HepG2 (cell line): ENCODE measurements at regions of chr14 and their contacts with region 1.

Region 1: GRCh38 chr14:28751467-28752058 is 15.0 kb upstream of the FOXG1 start:
- DNase-seq: peak; percentile 81
- ATAC-seq: peak; percentile 98
- H3K4me3 ChIP-seq: no peak overlapping the region
- H3K27ac ChIP-seq: no peak overlapping the region
- H3K4me1 ChIP-seq: no peaks in the 10 kb centered on the region
- H3K27me3 ChIP-seq: peaks cover 3 to 21% of the 10 kb centered on the region in 2 experiments; a peak in 3 of 5 replicates
- CTCF ChIP-seq: peak; percentile 95
- EP300 ChIP-seq: no peak
- POLR2A ChIP-seq: no peak
- RAD21 ChIP-seq: peak; percentile 67

Region 2: GRCh38 chr14:29168144-29168543 is 416.6 kb after region 1 on chr14:
- CTCF ChIA-PET with region 1: no interaction called
- POLR2A ChIA-PET with region 1: no interaction called
- in situ Hi-C with region 1: no loop called
- intact Hi-C with region 1: loop called (anchors 1 kb)
- DNase-seq: peak; percentile 16
- ATAC-seq: peak; percentile 99
- H3K4me3 ChIP-seq: no peak overlapping the region
- H3K27ac ChIP-seq: no peak overlapping the region
- H3K4me1 ChIP-seq: no peaks in the 10 kb centered on the region
- H3K27me3 ChIP-seq: no peaks in the 10 kb centered on the region
- CTCF ChIP-seq: peak; percentile 69
- EP300 ChIP-seq: no peak
- POLR2A ChIP-seq: no peak
- RAD21 ChIP-seq: no peak

Region 3: DNA sequence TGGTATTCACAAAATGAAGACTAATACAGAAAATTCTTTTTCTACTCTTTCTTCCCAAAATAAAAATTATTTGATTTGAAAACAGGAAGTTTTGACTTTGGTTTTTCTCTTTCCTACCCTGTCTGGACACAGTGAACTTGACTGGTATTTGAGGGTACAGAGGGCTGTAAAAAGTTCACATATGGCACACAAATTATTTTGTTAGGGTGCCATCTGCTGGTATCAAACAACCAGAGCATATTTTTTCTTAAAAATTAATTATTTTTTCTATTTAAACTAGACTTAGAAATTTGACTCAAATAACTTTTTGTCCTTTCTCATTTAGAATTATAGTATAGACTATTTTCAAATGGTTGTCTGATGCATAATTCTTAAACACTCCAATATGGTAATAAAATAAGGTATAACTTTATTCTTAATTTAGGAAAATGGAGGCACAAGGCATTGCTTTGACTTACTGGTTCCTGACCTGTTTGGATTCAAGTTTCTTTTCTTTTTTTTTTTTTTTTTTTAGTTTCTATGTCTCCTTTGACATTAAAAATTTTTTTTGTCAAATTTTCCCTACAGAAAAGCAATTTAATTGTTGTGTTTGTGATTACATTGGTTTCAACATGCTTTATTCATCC is 785.4 kb after region 1 on chr14:
- CTCF ChIA-PET with region 1: interaction called, 37 read pairs
- POLR2A ChIA-PET with region 1: no interaction called
- in situ Hi-C with region 1: loop called (anchors 5 kb)
- intact Hi-C with region 1: loop called (anchors 1 kb)
- DNase-seq: peak; percentile 25
- ATAC-seq: peak; percentile 27; the same call in 1 of the 3 replicates
- H3K4me3 ChIP-seq: no peak overlapping the region
- H3K27ac ChIP-seq: no peak overlapping the region
- H3K4me1 ChIP-seq: no peaks in the 10 kb centered on the region
- H3K27me3 ChIP-seq: no peaks in the 10 kb centered on the region
- CTCF ChIP-seq: peak; percentile 31; the same call in 1 of the 2 replicates
- EP300 ChIP-seq: no peak
- POLR2A ChIP-seq: no peak
- RAD21 ChIP-seq: no peak

Region 4: DNA sequence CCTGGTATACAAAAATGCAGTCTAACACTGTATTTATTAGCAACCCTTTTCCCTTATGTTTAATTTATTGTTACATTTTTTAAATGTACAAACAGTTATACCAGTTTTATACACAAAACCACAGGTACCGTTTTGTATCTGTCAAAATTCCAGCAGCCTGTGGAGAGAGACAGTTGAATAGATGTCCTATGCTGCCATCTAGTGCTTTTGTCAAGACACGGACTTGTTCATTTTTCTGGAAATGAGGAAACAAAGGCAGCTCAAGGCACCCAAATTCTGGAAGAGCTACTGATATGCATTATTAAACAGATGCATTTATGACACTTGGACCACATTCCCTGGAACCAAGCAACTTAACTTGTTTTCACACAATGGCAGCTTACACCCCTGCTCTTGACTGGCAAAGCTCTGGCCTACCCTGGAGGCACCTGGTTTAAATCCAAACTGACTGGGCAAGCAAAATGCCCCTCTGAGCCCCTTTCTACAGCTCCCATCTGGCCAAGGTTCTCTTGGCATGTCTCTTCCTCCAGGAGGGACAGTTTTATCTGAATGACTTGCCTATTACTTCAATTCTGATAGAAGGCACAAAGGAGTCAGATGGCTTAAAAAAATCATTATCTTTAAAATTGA is 1463.0 kb after region 1 on chr14:
- CTCF ChIA-PET with region 1: interaction called, 17 read pairs
- POLR2A ChIA-PET with region 1: no interaction called
- in situ Hi-C with region 1: loop called (anchors 5 kb)
- intact Hi-C with region 1: loop called (anchors 1 kb)
- DNase-seq: peak; percentile 75
- ATAC-seq: peak; percentile 91
- H3K4me3 ChIP-seq: no peak overlapping the region
- H3K27ac ChIP-seq: no peak overlapping the region
- H3K4me1 ChIP-seq: no peaks in the 10 kb centered on the region
- H3K27me3 ChIP-seq: no peaks in the 10 kb centered on the region
- CTCF ChIP-seq: peak; percentile 87
- EP300 ChIP-seq: no peak
- POLR2A ChIP-seq: no peak
- RAD21 ChIP-seq: peak; percentile 79

Region 5: DNA sequence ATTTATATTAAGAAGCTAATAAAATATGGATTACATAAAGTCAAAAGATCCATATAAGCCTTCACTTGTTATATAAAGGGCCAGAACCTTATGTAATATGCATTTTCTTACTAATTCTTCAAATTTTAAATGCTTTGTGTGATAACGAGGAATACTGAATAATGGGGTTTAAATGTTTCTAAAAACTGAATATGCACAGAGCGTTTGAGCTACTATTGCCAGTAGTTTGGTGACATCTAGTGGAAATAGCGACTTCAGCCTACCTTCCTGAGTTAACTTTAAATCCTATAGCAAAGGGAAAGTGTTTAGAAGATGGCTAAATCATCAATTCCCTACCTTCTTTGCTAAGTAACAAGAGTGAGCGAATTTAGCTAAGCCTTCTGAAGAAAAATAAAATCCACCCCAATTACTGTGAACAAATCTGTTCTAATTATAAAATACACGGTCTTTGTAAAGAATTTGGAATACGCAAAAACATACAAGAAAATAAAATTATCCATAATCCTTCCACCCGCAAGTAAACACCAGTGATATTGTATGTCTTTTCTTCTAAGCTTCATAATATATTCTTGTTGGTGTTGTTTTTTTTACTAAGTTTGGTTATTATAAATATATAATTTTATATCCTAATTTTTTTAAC is 1691.9 kb after region 1 on chr14:
- CTCF ChIA-PET with region 1: interaction called, 6 read pairs
- POLR2A ChIA-PET with region 1: no interaction called
- in situ Hi-C with region 1: loop called (anchors 5 kb)
- intact Hi-C with region 1: loop called (anchors 1 kb)
- DNase-seq: peak; percentile 77
- ATAC-seq: peak; percentile 88
- H3K4me3 ChIP-seq: no peak overlapping the region
- H3K27ac ChIP-seq: no peak overlapping the region
- H3K4me1 ChIP-seq: no peaks in the 10 kb centered on the region
- H3K27me3 ChIP-seq: no peaks in the 10 kb centered on the region
- CTCF ChIP-seq: peak; percentile 91
- EP300 ChIP-seq: no peak
- POLR2A ChIP-seq: no peak
- RAD21 ChIP-seq: no peak; the same call in none of the 2 replicates